Natural killer cell (primary cell): ENCODE measurements at regions of chr1 and their contacts with region 1.

Region 1: DNA sequence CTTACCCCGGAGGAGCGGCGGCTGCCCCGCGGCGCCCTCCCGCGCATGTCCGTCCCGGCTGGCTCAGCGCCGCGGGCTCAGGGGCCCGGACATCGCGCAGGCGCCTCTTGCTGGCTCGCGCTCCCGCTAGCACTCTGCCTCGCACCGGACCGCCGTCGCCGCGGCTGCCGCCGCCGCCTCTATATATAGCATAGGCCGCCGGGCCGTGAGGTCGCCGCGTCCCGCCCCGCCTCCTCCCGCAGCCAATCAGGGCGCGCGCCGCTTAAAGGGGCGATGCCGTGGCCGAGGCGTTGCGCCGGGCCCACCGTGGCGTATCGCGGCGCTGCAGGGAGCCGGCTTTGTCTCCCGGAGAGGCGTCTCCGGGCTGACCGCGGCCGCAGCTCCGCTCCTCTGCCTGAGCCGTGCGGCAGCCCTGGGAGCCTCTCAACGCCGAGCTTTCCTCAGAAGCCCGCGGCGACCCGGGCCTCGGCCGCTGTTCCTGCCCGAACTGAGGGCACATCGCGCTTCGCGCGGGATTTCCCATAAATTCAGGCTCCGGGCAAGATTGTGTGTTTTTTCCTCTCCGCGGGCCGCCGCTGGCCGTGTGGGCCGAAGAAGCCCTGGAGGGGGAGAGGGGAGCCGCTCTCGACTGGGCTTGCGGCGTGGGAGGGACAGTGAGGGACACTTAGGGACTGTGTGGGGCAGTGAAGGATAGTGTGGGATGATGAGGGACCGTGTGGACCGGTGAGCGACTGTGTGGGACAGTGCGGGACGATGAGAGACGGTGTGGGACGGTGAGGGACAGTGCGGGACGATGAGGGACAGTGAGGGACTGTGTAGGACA is at the start of gene ERRFI1:
- DNase-seq: peak; percentile 90 to 91
- ATAC-seq: peak; percentile 94 to 97 (median 97)
- H3K4me3 ChIP-seq: peak within 1 kb of the TSS; percentile 32
- H3K4me3 Mint-ChIP-seq: peak within 1 kb of the TSS; percentile 85
- H3K27ac ChIP-seq: no peak within 1 kb of the TSS
- H3K27ac Mint-ChIP-seq: peak within 1 kb of the TSS; percentile 48 to 80
- H3K4me1 ChIP-seq: peaks cover 11% of the 10 kb centered on the region
- H3K4me1 Mint-ChIP-seq: peaks cover 11 to 17% of the 10 kb centered on the region in 2 donors
- H3K27me3 ChIP-seq: peaks cover 25% of the 10 kb centered on the region
- H3K27me3 Mint-ChIP-seq: peaks cover 18 to 20% of the 10 kb centered on the region in 2 donors
- CTCF ChIP-seq: no peak
- total RNA-seq, gene ERRFI1: 2.9 to 4.9 (median 4.0) TPM

Region 2: GRCh38 chr1:7745791-7746190 is 280.6 kb before region 1 on chr1:
- intact Hi-C with region 1: no loop called
- DNase-seq: no peak
- ATAC-seq: no peak
- H3K4me3 ChIP-seq: no peak overlapping the region
- H3K4me3 Mint-ChIP-seq: no peak overlapping the region
- H3K27ac ChIP-seq: no peak overlapping the region
- H3K27ac Mint-ChIP-seq: no peak overlapping the region
- H3K4me1 ChIP-seq: no peaks in the 10 kb centered on the region
- H3K4me1 Mint-ChIP-seq: no peaks in the 10 kb centered on the region
- H3K27me3 ChIP-seq: no peaks in the 10 kb centered on the region
- H3K27me3 Mint-ChIP-seq: peaks cover 0 to 5% of the 10 kb centered on the region in 2 donors
- CTCF ChIP-seq: no peak

Region 3: GRCh38 chr1:7893529-7894180 is 132.7 kb before region 1 on chr1:
- intact Hi-C with region 1: no loop called
- DNase-seq: no peak
- ATAC-seq: no peak
- H3K4me3 ChIP-seq: no peak overlapping the region
- H3K4me3 Mint-ChIP-seq: no peak overlapping the region
- H3K27ac ChIP-seq: no peak overlapping the region
- H3K27ac Mint-ChIP-seq: no peak overlapping the region
- H3K4me1 ChIP-seq: peaks cover 9% of the 10 kb centered on the region
- H3K4me1 Mint-ChIP-seq: peaks cover 8 to 24% of the 10 kb centered on the region in 2 donors
- H3K27me3 ChIP-seq: no peaks in the 10 kb centered on the region
- H3K27me3 Mint-ChIP-seq: peaks cover 6 to 7% of the 10 kb centered on the region in 2 donors
- CTCF ChIP-seq: no peak

Region 4: GRCh38 chr1:8104278-8105236 is 78.2 kb after region 1 on chr1:
- intact Hi-C with region 1: no loop called
- DNase-seq: no peak
- ATAC-seq: peak in 1 of 3 donors; percentile 37
- H3K4me3 ChIP-seq: no peak overlapping the region
- H3K4me3 Mint-ChIP-seq: no peak overlapping the region
- H3K27ac ChIP-seq: no peak overlapping the region
- H3K27ac Mint-ChIP-seq: no peak overlapping the region
- H3K4me1 ChIP-seq: no peaks in the 10 kb centered on the region
- H3K4me1 Mint-ChIP-seq: peaks cover 0 to 5% of the 10 kb centered on the region in 2 donors
- H3K27me3 ChIP-seq: no peaks in the 10 kb centered on the region
- H3K27me3 Mint-ChIP-seq: peaks cover 6 to 17% of the 10 kb centered on the region in 2 donors
- CTCF ChIP-seq: no peak

Region 5: GRCh38 chr1:8152731-8153702 is 126.7 kb after region 1 on chr1:
- intact Hi-C with region 1: loop called (anchors 2 kb)
- DNase-seq: peak; percentile 48 to 90
- ATAC-seq: peak; percentile 84 to 89 (median 87)
- H3K4me3 ChIP-seq: peak overlapping the region; percentile 9
- H3K4me3 Mint-ChIP-seq: peak overlapping the region; percentile 72
- H3K27ac ChIP-seq: peak overlapping the region; percentile 95
- H3K27ac Mint-ChIP-seq: peak overlapping the region; percentile 91 to 94
- H3K4me1 ChIP-seq: peaks cover 31% of the 10 kb centered on the region
- H3K4me1 Mint-ChIP-seq: peaks cover 27 to 44% of the 10 kb centered on the region in 2 donors
- H3K27me3 ChIP-seq: peaks cover 9% of the 10 kb centered on the region
- H3K27me3 Mint-ChIP-seq: peaks cover 19% of the 10 kb centered on the region in 2 donors
- CTCF ChIP-seq: no peak

Region 6: DNA sequence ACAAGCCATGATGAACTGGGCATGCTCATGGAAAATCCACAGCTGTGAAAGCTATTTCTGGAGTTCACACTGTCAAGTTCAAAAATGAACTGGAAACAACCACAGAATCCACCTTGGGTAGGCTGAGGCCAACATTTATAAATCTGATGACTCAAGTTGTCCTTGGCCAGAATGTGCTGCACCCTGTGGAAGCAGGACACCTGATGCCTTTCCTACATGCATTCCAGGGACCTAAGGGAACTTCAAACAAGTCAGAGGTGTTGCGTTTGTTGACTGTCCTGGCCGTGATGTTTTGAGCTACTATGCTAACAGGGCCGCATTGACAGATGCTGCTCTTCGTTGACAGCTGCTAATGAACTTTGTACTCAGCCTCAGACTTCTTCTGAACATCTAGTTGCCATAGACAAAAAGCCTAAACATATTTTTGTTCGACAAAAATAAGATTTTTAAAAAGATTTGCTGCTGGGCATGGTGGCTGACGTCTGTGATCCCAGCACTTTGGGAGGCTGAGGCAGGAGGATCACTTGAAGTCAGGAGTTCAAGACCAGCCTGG is 163.6 kb after region 1 on chr1:
- intact Hi-C with region 1: no loop called
- DNase-seq: no peak
- ATAC-seq: no peak
- H3K4me3 ChIP-seq: no peak overlapping the region
- H3K4me3 Mint-ChIP-seq: no peak overlapping the region
- H3K27ac ChIP-seq: no peak overlapping the region
- H3K27ac Mint-ChIP-seq: no peak overlapping the region
- H3K4me1 ChIP-seq: no peaks in the 10 kb centered on the region
- H3K4me1 Mint-ChIP-seq: peaks cover 0 to 5% of the 10 kb centered on the region in 2 donors
- H3K27me3 ChIP-seq: no peaks in the 10 kb centered on the region
- H3K27me3 Mint-ChIP-seq: no peaks in the 10 kb centered on the region
- CTCF ChIP-seq: no peak

Region 7: GRCh38 chr1:8238851-8239305 is 212.5 kb after region 1 on chr1:
- intact Hi-C with region 1: loop called (anchors 5 kb)
- DNase-seq: no peak
- ATAC-seq: no peak
- H3K4me3 ChIP-seq: no peak overlapping the region
- H3K4me3 Mint-ChIP-seq: no peak overlapping the region
- H3K27ac ChIP-seq: no peak overlapping the region
- H3K27ac Mint-ChIP-seq: no peak overlapping the region
- H3K4me1 ChIP-seq: peaks cover 3% of the 10 kb centered on the region
- H3K4me1 Mint-ChIP-seq: peaks cover 0 to 7% of the 10 kb centered on the region in 2 donors
- H3K27me3 ChIP-seq: no peaks in the 10 kb centered on the region
- H3K27me3 Mint-ChIP-seq: peaks cover 0 to 7% of the 10 kb centered on the region in 2 donors
- CTCF ChIP-seq: no peak

Region 8: DNA sequence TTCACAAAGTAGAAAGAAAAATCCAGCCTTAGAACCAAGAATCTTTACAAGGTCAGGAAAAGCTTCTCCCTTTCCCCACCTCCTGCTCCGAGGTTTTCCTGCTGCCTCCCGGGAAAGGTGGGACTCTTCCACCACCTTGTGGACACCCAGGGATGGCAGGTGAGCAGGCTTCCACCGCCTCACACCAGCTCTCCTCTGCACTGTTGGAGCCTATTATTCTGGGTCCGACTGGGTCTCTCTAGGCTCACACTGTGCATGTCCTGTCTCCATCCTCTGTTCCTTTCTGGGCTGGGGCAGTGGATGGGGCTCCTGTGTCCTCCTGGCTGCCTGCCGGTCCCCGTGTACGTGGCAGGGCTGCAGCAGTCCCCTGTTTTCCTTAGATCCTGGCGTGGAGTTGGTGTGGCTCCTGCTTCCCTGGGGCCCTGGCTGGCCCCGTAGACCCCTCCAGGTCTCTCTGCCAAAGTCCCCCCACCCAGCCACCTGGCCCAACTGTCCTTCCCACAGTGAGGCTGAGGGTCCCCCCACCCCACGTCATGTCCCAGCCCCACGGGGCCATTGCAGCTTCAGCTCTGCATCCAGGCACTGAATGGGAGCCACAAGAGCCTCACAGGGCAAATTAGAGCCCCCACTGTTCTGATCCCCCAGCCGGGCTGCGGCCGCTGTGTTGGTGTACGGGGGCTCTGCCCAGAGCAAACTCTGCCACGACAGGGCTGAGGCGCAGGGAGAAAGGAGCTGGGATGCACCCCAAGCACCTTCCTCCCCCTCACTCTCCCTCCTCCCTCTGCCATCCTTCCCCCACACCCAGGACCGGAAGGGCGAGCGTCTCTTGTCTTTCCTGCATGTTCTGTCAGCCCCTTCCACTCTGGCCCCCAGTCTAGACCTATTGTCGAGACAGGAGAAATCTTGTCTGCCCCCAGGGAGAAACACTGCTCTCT is 288.2 kb after region 1 on chr1:
- intact Hi-C with region 1: loop called (anchors 1 kb)
- DNase-seq: peak; percentile 24 to 74
- ATAC-seq: peak in 2 of 3 donors; percentile 32 to 35
- H3K4me3 ChIP-seq: no peak overlapping the region
- H3K4me3 Mint-ChIP-seq: no peak overlapping the region
- H3K27ac ChIP-seq: no peak overlapping the region
- H3K27ac Mint-ChIP-seq: no peak overlapping the region
- H3K4me1 ChIP-seq: peaks cover 18% of the 10 kb centered on the region
- H3K4me1 Mint-ChIP-seq: peaks cover 4 to 25% of the 10 kb centered on the region in 2 donors
- H3K27me3 ChIP-seq: peaks cover 21% of the 10 kb centered on the region
- H3K27me3 Mint-ChIP-seq: peaks cover 33 to 37% of the 10 kb centered on the region in 2 donors
- CTCF ChIP-seq: peak; percentile 59

Region 9: DNA sequence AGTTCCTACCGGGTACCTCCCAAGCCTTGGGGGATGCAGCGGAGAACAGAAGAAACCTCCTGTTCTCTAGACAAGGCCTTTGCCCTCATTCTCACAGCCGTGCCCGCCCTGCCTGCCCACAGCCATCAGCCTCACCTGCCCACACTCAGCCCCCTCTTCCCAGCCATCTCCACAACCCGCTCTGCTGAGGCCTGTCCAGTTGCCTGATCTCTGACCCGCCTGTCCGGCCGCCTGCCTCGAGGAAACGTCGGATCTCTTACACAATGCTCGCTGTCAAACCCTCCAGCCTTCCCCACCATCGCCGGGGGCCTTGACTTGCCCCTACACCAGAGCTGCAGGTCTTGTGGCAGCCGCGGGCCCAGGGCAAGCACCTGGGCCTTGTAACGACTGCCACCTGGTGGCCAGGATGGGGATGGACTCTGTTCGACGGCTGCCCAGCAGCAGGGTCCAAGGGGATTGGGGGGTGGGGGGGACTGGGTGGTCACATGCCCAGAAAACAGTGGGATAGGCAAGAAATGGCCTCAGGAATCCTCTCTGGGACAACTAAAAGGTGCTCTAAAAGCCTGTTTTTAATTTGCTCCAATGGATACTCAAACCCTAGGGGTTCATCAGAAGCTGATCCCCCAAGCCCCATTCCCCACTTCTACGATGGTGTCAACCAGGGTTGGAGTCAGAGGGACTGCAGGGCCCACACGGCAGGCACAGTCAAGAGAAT is 322.6 kb after region 1 on chr1:
- intact Hi-C with region 1: loop called (anchors 1 kb)
- DNase-seq: peak; percentile 71 to 85
- ATAC-seq: peak; percentile 86 to 98 (median 94)
- H3K4me3 ChIP-seq: no peak overlapping the region
- H3K4me3 Mint-ChIP-seq: no peak overlapping the region
- H3K27ac ChIP-seq: no peak overlapping the region
- H3K27ac Mint-ChIP-seq: peak overlapping the region in 1 of 2 donors; percentile 54
- H3K4me1 ChIP-seq: peaks cover 6% of the 10 kb centered on the region
- H3K4me1 Mint-ChIP-seq: peaks cover 5 to 6% of the 10 kb centered on the region in 2 donors
- H3K27me3 ChIP-seq: no peaks in the 10 kb centered on the region
- H3K27me3 Mint-ChIP-seq: peaks cover 0 to 8% of the 10 kb centered on the region in 2 donors
- CTCF ChIP-seq: peak; percentile 79